ENCODE measurements at regions of chr2 and their contacts with region 1.

Region 1: DNA sequence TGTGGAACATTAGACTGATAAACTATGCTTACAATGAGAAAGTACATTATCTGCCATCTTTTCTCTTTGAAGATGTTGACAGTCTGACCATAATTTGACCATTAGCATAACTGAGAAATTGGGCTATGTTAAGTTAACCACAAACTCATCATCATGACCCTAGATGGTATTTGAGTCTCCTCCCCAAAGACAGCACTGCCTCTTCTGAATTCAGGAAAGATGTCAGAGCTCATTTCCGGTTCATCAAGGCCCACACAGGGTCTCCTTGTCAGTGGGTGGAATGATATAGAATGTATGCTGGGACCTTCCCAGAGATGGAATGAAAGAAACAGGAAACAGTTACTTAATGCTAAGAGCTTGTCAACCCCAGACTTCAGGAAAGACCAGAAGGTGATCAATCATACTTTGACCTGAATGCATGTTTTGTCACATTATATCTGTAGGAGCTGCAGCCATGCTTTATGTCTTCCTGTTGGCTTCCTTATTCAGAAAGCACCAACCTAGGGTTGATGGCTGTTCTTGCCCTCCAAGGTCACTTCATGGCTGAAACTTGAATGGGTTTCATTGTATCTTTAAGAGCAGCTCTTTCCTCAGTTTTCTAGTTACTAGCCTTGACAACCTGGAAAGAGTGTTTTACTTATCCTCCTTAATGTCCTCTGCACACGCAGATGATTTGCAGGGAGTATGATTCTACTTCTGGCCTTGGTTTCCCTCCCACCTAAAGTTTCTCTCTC is 99.1 kb upstream of the NEUROD1 start:
- DNase-seq: peak; percentile 99
- H3K4me3 ChIP-seq: peak overlapping the region; percentile 3
- H3K27ac ChIP-seq: peak overlapping the region; percentile 98
- H3K4me1 ChIP-seq: peaks cover 67% of the 10 kb centered on the region
- H3K27me3 ChIP-seq: no peaks in the 10 kb centered on the region
- CTCF ChIP-seq: no peak

Region 2: GRCh38 chr2:181760521-181760920 is 18.9 kb before region 1 on chr2:
- CTCF ChIA-PET with region 1: no interaction called
- POLR2A ChIA-PET with region 1: no interaction called
- intact Hi-C with region 1: no loop called
- DNase-seq: no peak
- H3K4me3 ChIP-seq: no peak overlapping the region
- H3K27ac ChIP-seq: no peak overlapping the region
- H3K4me1 ChIP-seq: peaks cover 14% of the 10 kb centered on the region
- H3K27me3 ChIP-seq: no peaks in the 10 kb centered on the region
- CTCF ChIP-seq: no peak

Region 3: GRCh38 chr2:181851726-181852125 is 72.3 kb after region 1 on chr2:
- CTCF ChIA-PET with region 1: interaction called, 10 read pairs
- POLR2A ChIA-PET with region 1: no interaction called
- intact Hi-C with region 1: no loop called
- DNase-seq: peak; percentile 70
- H3K4me3 ChIP-seq: no peak overlapping the region
- H3K27ac ChIP-seq: peak overlapping the region; percentile 9
- H3K4me1 ChIP-seq: peaks cover 42% of the 10 kb centered on the region
- H3K27me3 ChIP-seq: no peaks in the 10 kb centered on the region
- CTCF ChIP-seq: no peak